Tibial artery (tissue), 4 donors: ENCODE measurements at regions of chr11 and their contacts with region 1.

Region 1: GRCh38 chr11:65615229-65615941 is at the start of gene PCNX3:
- DNase-seq: peak; percentile 100
- H3K4me3 ChIP-seq: peak within 1 kb of the TSS; percentile 98
- H3K27ac ChIP-seq: peak within 1 kb of the TSS; percentile 88 to 96
- H3K4me1 ChIP-seq: peaks cover 0 to 59% (median 49%) of the 10 kb centered on the region in 4 donors
- H3K27me3 ChIP-seq: no peaks in the 10 kb centered on the region
- CTCF ChIP-seq: no peak

Region 2: GRCh38 chr11:65524741-65525545 is 90.4 kb before region 1 on chr11 and contains the start of gene SCYL1:
- intact Hi-C with region 1: loop called (anchors 5 kb)
- DNase-seq: peak; percentile 66 to 89
- H3K4me3 ChIP-seq: peak within 1 kb of the TSS; percentile 82 to 98
- H3K27ac ChIP-seq: peak within 1 kb of the TSS; percentile 90
- H3K4me1 ChIP-seq: peaks cover 4 to 27% (median 21%) of the 10 kb centered on the region in 4 donors
- H3K27me3 ChIP-seq: no peaks in the 10 kb centered on the region
- CTCF ChIP-seq: peak in 1 of 2 experiments; percentile 11

Region 3: DNA sequence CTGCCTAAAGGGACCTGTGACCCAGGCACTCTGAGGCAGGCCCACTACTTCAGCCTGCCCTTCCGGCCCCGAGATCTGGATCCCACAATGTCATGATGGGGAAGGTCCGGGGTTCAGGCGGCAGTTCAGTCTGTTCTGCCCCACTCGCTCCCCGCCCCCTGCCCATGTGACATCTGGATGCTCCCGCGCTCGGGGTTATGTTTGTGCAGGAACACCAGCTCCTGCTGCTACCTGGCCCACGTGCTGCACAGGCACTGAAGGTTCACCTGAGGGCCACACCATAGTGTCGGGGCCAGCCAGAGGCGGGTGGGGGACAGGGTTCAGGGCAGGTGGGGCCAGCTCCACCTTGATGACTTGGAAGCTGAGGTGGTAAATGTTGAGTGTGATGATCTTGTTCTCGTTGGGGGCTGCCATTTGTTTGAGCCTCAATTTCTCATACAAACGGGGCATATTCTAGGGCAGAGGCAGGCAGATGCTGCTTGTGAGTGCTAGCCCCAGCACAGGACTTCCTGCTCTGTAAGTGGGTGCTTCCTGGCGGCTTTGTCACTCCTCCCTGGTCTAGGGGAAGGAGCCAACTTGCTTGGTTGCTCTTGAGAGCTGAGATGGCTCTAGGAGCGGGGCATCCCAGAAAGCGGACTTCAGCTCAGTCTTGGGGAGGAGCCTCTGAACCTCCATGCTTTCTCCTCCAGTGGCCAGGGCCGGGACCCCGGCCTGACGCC is 18.2 kb after region 1 on chr11:
- intact Hi-C with region 1: no loop called
- DNase-seq: no peak
- H3K4me3 ChIP-seq: no peak overlapping the region
- H3K27ac ChIP-seq: no peak overlapping the region
- H3K4me1 ChIP-seq: peaks cover 0 to 14% (median 11%) of the 10 kb centered on the region in 4 donors
- H3K27me3 ChIP-seq: no peaks in the 10 kb centered on the region
- CTCF ChIP-seq: no peak

Region 4: GRCh38 chr11:65662799-65663638 is 47.6 kb after region 1 on chr11 and contains the start of gene RELA:
- intact Hi-C with region 1: loop called (anchors 5 kb)
- DNase-seq: peak; percentile 97 to 98
- H3K4me3 ChIP-seq: peak within 1 kb of the TSS; percentile 67 to 74
- H3K27ac ChIP-seq: peak within 1 kb of the TSS; percentile 95 to 97
- H3K4me1 ChIP-seq: peaks cover 0 to 44% (median 35%) of the 10 kb centered on the region in 4 donors
- H3K27me3 ChIP-seq: no peaks in the 10 kb centered on the region
- CTCF ChIP-seq: peak in 1 of 2 experiments; percentile 13